Activated T-helper 2 cell treated with anti-CD3 and anti-CD28 coated beads, Interferon-gamma antibody, Interleukin-2, Interleukin-4, amounts not matched to agents 10 μg/mL and 5 μg/mL and 100 μg/mL, durations not matched to agents 14 hours and 24 hours and 36 hours (primary cell): ENCODE measurements at regions of chr15 and their contacts with region 1.

Region 1: GRCh38 chr15:36883713-36884517 is 216.4 kb downstream of the MEIS2 start:
- DNase-seq: peak; percentile 59
- H3K4me3 Mint-ChIP-seq: no peak overlapping the region
- H3K27ac Mint-ChIP-seq: no peak overlapping the region
- H3K4me1 Mint-ChIP-seq: peaks cover 2% of the 10 kb centered on the region
- H3K27me3 Mint-ChIP-seq: peaks cover 93% of the 10 kb centered on the region

Region 2: GRCh38 chr15:37100109-37100965 is 216.4 kb after region 1 on chr15 and contains the start of gene MEIS2:
- intact Hi-C with region 1: loop called (anchors 2 kb)
- DNase-seq: no peak
- H3K4me3 Mint-ChIP-seq: peak within 1 kb of the TSS; percentile 88
- H3K27ac Mint-ChIP-seq: peak within 1 kb of the TSS; percentile 53
- H3K4me1 Mint-ChIP-seq: peaks cover 23% of the 10 kb centered on the region
- H3K27me3 Mint-ChIP-seq: peaks cover 92% of the 10 kb centered on the region
- total RNA-seq, gene MEIS2: not detected in 2 replicates

Region 3: DNA sequence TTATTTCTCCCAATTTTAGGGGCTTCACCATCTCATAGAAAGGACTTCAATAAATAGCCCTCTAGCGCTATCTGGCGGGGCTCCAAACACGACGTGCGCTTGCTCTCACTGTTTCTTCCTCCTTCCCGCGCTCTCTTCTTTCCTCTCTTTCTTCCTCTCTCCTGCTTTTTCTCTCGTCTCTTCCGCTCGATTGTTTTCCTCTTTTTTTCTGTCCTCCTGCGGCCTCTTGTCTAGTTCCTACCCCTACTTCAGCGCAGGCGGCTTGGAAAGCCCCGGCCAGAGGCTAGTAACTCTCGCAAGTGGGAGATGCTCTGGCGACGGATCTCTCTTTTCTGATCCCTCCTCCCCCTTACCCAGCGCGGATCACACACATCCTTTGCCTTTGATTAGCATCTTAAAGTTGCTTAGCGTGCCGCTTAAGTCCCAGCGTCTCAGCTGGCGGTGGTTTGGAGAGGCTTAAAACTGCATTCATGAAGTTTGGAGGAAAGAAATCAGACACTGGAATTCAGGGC is 222.6 kb after region 1 on chr15:
- intact Hi-C with region 1: loop called (anchors 2 kb)
- DNase-seq: no peak
- H3K4me3 Mint-ChIP-seq: no peak overlapping the region
- H3K27ac Mint-ChIP-seq: no peak overlapping the region
- H3K4me1 Mint-ChIP-seq: peaks cover 9% of the 10 kb centered on the region
- H3K27me3 Mint-ChIP-seq: peaks cover 96% of the 10 kb centered on the region

Region 4: GRCh38 chr15:37891766-37892368 is 1008.0 kb after region 1 on chr15:
- intact Hi-C with region 1: loop called (anchors 5 kb)
- DNase-seq: no peak
- H3K4me3 Mint-ChIP-seq: no peak overlapping the region
- H3K27ac Mint-ChIP-seq: no peak overlapping the region
- H3K4me1 Mint-ChIP-seq: no peaks in the 10 kb centered on the region
- H3K27me3 Mint-ChIP-seq: no peaks in the 10 kb centered on the region